Upper lobe of right lung (tissue), 1 donor: ENCODE measurements at regions of chr5 and their contacts with region 1.

Region 1: DNA sequence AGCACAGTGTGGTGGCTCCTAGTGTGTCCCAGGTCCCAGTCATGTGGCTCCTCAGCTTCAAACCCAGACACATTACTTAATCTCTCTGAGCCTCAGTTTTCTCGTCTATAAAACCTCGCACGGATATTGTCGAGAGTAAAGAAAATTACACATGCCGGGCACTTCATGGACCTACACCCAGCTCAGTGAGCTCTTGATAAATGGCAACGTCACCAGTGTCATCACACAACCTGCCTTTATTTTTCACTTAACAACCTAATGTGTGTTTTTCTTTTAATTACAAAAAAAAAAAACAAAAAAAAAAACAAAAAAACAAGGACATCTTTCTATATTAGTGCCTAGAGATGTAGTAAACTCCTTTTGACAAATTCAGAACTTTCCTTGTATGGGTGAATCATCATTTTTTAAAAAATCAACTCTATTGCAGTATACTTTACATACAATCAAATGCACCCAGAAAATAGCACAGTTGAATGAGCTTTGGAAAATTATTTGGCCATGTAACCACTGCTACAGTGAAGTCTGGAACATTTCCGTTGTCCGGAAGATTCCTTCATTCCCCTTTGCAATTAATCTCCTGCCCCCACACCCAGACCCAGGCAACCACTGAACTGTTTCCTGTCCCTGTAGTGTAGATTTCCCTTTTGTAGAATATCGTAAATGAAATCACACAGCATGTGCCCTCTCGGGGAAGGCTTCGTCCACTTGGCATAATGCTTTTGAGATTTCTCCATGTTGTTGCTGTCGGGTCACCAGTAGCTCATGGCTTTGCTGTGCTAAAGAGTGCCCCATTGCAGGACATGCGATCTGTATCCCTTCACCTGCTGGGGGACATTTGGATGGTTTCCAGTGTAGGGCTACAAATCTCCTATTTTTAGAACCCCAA is 100.4 kb upstream of the LARP1 start:
- DNase-seq: peak; percentile 13
- ATAC-seq: peak; percentile 33
- H3K4me3 ChIP-seq: no peak overlapping the region
- H3K27ac ChIP-seq: peak overlapping the region; percentile 44
- H3K4me1 ChIP-seq: peaks cover 17% of the 10 kb centered on the region
- H3K27me3 ChIP-seq: no peaks in the 10 kb centered on the region
- CTCF ChIP-seq: no peak

Region 2: DNA sequence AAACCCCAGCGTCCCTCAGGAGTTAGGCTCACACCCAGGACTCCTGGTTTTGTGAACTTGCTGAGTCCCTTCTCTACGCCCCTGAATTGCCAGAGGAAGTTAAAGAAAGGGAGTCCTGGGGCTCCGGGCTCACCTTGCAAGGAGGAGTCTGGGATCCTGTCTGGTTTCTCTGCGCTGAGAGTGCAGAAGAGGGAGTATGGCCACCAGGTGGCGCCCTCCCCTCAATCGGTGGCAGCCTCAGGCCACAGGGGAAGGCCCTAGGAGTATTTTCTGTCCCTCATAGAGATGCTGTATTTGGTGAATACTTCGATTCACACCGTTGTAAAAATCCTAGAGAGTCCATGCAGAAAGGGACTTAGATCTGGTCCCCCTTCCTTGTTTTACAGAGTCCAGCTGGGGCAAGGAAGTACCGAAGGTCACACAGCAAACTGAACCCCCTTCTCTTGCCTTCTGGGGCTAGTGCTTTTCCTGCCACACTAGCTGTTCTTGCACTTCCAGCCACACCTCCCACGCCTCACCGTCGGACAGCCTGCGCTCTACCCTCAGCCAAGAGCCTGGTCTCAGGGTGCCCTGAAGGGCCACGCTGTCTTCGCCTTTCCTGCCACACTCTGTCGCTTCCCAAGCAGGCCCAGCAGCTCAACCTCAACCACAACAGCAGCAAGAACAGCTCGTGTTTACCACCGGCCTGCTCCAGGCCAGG is 186.9 kb before region 1 on chr5:
- intact Hi-C with region 1: no loop called
- DNase-seq: peak; percentile 89
- ATAC-seq: peak; percentile 97
- H3K4me3 ChIP-seq: no peak overlapping the region
- H3K27ac ChIP-seq: no peak overlapping the region
- H3K4me1 ChIP-seq: no peaks in the 10 kb centered on the region
- H3K27me3 ChIP-seq: peaks cover 45% of the 10 kb centered on the region
- CTCF ChIP-seq: peak; percentile 95

Region 3: GRCh38 chr5:154611341-154611767 is 43.4 kb before region 1 on chr5:
- intact Hi-C with region 1: no loop called
- DNase-seq: no peak
- ATAC-seq: peak; percentile 17
- H3K4me3 ChIP-seq: peak overlapping the region; percentile 41
- H3K27ac ChIP-seq: no peak overlapping the region
- H3K4me1 ChIP-seq: peaks cover 13% of the 10 kb centered on the region
- H3K27me3 ChIP-seq: peaks cover 44% of the 10 kb centered on the region
- CTCF ChIP-seq: no peak

Region 4: DNA sequence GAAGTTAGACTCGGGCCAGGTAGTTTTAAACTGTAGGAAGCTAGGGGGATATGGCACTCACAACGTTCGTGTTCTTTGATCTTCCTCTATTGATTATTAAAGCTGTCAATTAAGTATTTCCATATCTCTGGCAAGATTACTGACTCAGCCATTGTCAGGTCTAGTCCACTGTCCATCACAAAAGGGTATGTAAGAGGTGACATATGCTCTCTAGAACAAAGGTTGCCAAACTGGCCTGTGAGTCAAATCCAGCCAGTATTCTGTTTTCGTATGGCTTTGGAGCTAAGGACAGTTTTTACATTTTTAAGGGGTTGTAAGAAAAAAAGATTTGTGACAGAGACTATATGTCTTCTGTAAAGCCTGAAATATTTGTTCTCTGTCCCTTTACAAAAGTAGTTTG is 151.4 kb after region 1 on chr5:
- intact Hi-C with region 1: loop called (anchors 5 kb)
- DNase-seq: no peak
- ATAC-seq: no peak
- H3K4me3 ChIP-seq: no peak overlapping the region
- H3K27ac ChIP-seq: no peak overlapping the region
- H3K4me1 ChIP-seq: no peaks in the 10 kb centered on the region
- H3K27me3 ChIP-seq: no peaks in the 10 kb centered on the region
- CTCF ChIP-seq: no peak